AG04450 (cell line): ENCODE measurements at regions of chr6 and their contacts with region 1.

Region 1: DNA sequence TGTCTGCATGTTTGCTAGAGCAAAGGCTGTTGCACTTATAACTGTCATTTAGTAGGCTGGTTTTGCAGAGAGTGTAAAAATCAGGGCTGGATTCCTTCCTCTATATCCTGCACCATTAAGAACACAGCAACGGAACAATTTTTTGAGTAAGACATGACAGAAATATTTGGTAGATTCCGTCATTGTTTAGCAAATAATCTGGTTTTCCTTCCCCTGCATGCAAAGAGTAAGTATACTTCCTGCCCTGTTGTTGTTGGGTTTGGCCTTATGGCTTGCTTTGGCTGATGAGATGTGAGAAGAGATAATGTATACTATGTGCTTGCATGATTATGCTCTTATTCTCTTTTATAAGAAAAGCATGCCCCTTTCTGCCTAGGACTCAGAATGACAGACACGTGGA is 23.8 kb downstream of the MANEA start:
- DNase-seq: peak; percentile 21
- H3K4me3 ChIP-seq: no peak overlapping the region; the same call in 1 of the 2 replicates
- H3K27ac ChIP-seq: no peak overlapping the region
- H3K27me3 ChIP-seq: no peaks in the 10 kb centered on the region
- CTCF ChIP-seq: no peak

Region 2: DNA sequence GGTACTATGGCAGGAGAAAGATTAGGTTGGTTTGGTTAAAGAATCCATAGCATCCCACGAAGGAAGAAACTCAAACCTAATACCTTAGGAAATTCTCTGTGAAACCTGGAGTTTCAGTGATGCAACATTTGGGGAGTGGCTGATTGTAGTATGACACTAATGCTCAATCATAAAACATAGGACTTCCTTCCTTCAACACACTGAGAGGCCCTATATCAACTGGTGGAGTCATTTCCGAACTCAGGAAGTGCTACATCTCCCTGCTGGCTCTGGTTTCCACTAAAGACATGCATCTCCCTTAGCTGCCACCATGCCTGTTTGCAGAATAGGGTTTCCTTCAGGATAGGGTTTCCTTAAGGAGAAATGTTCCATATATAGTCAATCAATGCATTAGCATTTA is 29.0 kb before region 1 on chr6:
- CTCF ChIA-PET with region 1: no interaction called
- POLR2A ChIA-PET with region 1: interaction called, 10 read pairs
- DNase-seq: no peak
- H3K4me3 ChIP-seq: no peak overlapping the region
- H3K27ac ChIP-seq: no peak overlapping the region
- H3K27me3 ChIP-seq: no peaks in the 10 kb centered on the region
- CTCF ChIP-seq: no peak

Region 3: GRCh38 chr6:95614094-95614493 is 13.0 kb after region 1 on chr6:
- CTCF ChIA-PET with region 1: no interaction called
- POLR2A ChIA-PET with region 1: no interaction called
- DNase-seq: no peak
- H3K4me3 ChIP-seq: no peak overlapping the region
- H3K27ac ChIP-seq: no peak overlapping the region
- H3K27me3 ChIP-seq: no peaks in the 10 kb centered on the region
- CTCF ChIP-seq: no peak